HEK293T (cell line): ENCODE measurements at regions of chr17 and their contacts with region 1.

Region 1: DNA sequence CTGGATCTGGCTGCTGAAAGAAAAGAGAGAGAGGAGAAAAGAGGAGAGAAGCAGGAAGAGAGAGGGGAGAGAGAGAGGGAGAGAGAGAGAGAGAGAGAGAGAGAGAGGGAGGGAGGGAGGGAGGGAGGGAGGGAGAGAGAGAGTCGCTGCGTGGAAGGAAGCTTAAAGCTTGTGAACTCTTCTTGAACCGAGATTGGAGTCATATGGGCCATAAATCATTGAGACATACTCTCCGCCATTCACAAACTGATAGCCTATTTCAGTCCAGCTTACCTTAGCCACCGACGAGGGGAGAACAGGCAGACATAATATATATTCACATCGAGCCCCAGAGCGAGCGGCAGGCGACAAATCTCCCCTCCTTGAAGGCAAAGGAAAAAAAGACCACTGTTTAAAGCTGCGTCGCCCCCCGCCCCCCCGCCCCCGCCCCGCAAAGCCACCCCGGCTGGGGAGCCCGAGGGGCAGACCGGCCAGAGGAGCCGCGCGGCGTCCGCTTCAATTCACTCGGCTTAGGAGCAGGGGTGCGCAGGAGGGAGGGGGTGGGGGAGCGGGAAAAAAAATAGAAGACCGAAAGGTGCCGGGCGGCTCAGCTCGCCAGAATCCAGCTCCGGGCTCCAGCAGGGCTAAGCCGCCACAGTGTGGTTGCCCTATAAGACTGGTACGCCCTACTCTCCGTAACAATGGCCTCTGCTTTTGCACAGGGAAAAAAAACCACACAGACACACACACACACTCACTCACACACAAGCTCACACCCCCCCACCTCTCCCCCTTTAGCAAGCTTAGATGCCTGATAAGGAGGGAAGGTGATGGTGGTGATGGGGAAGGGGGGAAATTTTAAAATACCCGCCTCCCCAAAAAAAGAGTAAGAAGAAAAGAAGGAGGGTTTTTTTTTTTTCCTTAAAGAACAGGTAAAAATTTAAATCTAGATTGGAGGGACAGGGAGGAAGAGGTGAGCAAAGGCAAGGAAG is 10.6 kb upstream of the HOXB2 start:
- DNase-seq: peak; percentile 79

Region 2: GRCh38 chr17:48462946-48463345 is 92.6 kb before region 1 on chr17:
- CTCF ChIA-PET with region 1: no interaction called
- POLR2A ChIA-PET with region 1: no interaction called
- DNase-seq: no peak

Region 3: DNA sequence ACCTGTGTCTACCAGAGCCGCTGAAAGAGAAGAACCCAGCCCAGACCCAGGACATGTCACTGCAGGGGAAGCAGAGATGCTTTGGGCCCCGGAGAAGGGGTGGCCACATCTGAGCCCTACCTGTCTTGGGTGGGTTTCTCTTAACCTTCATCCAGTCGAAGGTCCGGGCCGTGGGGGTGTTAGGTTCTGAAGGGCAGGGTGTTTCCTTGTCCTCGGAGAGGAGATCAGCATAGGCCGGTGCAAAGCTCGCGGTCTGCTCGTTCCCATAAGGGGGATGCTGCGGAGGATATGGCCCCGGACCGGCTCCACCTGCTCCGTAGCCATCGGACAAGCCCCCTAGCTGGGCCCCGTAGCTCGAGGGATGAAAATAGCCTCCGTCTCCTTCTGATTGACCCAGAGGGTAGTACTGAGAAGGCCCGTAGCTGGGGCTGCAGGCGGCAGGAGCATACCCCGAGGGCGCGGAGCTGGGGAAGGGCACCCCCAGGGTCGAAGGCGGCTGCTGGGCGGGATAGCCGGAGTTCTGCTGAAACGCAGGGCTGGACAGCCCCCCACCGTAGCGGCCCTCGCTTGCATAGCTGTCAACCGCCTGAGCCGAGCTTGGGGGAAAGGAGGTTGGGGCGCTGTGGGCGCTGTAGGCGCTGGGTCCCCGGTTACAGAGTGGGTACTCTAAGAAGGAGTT is 25.2 kb before region 1 on chr17:
- CTCF ChIA-PET with region 1: no interaction called
- POLR2A ChIA-PET with region 1: no interaction called
- DNase-seq: no peak

Region 4: DNA sequence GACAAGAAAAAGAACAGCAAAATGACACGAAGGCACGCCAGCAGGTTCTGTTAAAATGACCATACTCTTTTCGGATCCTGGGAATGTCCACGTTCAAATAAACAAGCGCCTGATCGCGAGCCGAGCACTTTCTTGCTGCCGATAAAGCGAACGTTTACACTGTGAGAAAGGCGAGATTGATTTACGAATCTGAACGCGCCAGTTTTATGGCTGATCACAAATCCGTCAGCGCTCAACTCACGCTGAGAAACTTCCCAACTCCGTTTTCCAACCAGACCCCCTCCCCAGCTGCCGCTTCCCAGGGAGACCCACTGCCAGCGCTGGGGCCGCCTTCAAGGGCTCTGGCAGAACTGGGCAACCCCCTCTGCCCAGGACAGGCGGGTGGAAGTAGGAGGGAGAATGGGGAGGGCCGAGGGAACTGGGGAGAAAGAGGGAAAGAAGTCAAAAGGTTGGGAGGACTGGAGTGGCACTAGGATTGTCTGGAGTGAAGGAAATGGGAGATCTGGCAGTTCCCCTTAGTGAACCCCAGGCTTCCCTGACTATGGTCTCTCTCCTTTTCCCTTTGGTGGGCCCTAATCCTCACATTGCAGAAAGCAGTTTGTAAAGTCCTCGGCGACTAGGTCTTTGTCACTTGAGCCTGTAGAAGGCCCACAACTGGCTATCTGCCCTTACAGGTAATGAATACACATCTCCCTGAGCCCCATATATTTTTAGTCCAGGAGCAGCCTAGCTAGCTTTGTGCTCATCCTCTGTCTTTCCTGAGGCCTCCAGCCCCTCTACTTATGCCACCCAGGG is 15.7 kb after region 1 on chr17:
- CTCF ChIA-PET with region 1: interaction called, 3 read pairs
- POLR2A ChIA-PET with region 1: interaction called, 12 read pairs
- DNase-seq: no peak

Region 5: GRCh38 chr17:48586355-48587258 is 31.1 kb after region 1 on chr17:
- CTCF ChIA-PET with region 1: interaction called, 3 read pairs
- POLR2A ChIA-PET with region 1: interaction called, 25 read pairs
- DNase-seq: no peak